IMR-90 (cell line): ENCODE measurements at regions of chr11 and their contacts with region 1.

Region 1: GRCh38 chr11:110376711-110377324 is 52.9 kb upstream of the FDX1 start:
- DNase-seq: peak; percentile 79
- ATAC-seq: peak; percentile 84
- H3K4me3 ChIP-seq: no peak overlapping the region
- H3K27ac ChIP-seq: no peak overlapping the region
- H3K4me1 ChIP-seq: peaks cover 6% of the 10 kb centered on the region
- H3K27me3 ChIP-seq: no peaks in the 10 kb centered on the region
- CTCF ChIP-seq: peak; percentile 83
- POLR2A ChIP-seq: no peak
- RAD21 ChIP-seq: peak; percentile 79

Region 2: DNA sequence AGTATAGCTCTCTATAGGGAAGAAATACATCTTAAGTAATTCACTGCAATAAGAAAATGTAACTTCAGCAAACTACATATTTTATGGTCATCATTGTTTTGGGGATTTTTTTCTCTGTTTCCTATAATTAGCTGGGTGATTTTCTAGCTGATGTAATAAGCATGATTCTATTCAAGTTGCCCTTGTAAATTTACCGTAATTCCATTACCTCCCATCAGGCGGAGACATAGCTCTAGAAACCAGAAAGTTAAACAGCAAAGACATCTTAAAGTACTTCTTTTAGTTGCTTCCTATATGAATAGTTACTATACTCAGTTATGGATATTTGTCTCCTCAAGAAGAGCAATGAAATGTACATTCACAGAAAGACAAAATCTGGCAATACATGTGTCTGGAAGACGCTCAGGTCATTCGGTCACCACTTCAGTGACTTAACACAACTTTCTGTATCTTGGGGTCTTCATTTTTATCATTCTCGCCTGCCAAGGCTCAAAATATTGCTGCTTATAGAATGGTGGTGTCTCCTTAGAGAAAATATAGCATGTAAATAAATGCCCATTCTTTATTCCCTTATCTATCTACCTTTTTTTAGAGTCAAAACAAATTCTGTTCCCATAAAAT is 523.6 kb before region 1 on chr11:
- CTCF ChIA-PET with region 1: no interaction called
- POLR2A ChIA-PET with region 1: no interaction called
- dilution Hi-C with region 1: no loop called
- in situ Hi-C with region 1: loop called (anchors 25 kb)
- intact Hi-C with region 1: loop called (anchors 5 kb)
- DNase-seq: peak; percentile 87
- ATAC-seq: peak; percentile 87
- H3K4me3 ChIP-seq: no peak overlapping the region
- H3K27ac ChIP-seq: no peak overlapping the region
- H3K4me1 ChIP-seq: no peaks in the 10 kb centered on the region; the same call in 1 of the 2 replicates
- H3K27me3 ChIP-seq: no peaks in the 10 kb centered on the region
- CTCF ChIP-seq: peak; percentile 91
- POLR2A ChIP-seq: no peak
- RAD21 ChIP-seq: peak; percentile 87

Region 3: GRCh38 chr11:109956124-109956793 is 420.6 kb before region 1 on chr11:
- CTCF ChIA-PET with region 1: no interaction called
- POLR2A ChIA-PET with region 1: no interaction called
- dilution Hi-C with region 1: no loop called
- in situ Hi-C with region 1: loop called (anchors 10 kb)
- intact Hi-C with region 1: no loop called
- DNase-seq: no peak
- ATAC-seq: no peak
- H3K4me3 ChIP-seq: no peak overlapping the region
- H3K27ac ChIP-seq: no peak overlapping the region
- H3K4me1 ChIP-seq: no peaks in the 10 kb centered on the region
- H3K27me3 ChIP-seq: no peaks in the 10 kb centered on the region
- CTCF ChIP-seq: no peak
- POLR2A ChIP-seq: no peak
- RAD21 ChIP-seq: no peak

Region 4: DNA sequence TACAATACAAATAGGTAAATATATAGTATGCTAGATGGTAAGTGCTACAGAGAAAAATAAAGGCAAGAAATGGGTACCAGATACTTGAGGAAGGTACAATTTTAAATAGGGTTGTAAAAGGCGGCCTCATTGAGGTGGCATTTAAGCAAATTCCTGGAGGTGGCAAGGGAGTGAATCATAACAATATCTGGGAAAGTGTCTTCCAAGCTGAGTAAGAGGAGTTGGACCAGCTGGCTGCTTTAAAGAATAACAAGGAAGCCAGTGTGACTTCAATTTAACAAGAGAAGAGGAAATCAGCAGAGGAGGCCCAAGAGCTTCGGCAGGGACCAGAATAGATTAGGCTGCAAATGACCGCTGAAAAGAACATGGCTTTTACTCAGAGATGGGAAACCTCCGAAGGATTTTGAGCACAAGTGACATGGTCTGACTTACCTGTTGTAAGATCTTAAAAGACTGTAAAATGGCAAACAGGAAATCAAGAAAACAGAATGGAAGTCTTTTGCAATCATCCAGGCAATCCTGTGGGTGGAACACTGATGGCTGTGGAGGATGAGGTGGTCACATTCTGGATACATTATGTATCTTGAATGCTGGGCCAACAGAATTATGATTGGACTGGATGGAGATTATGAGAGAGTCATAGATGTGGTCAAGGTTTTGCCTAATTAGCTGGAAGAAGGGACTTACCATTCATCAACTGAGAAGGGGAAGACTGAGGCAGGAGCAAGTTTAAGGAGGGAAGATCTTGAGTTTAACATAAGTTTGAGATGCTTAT is 157.6 kb before region 1 on chr11:
- CTCF ChIA-PET with region 1: no interaction called
- POLR2A ChIA-PET with region 1: no interaction called
- dilution Hi-C with region 1: no loop called
- in situ Hi-C with region 1: no loop called
- intact Hi-C with region 1: no loop called
- DNase-seq: peak; percentile 53
- ATAC-seq: peak; percentile 32
- H3K4me3 ChIP-seq: no peak overlapping the region
- H3K27ac ChIP-seq: no peak overlapping the region
- H3K4me1 ChIP-seq: no peaks in the 10 kb centered on the region
- H3K27me3 ChIP-seq: no peaks in the 10 kb centered on the region
- CTCF ChIP-seq: no peak
- POLR2A ChIP-seq: no peak
- RAD21 ChIP-seq: no peak